ENCODE measurements at regions of chr7 and their contacts with region 1.

Region 1: DNA sequence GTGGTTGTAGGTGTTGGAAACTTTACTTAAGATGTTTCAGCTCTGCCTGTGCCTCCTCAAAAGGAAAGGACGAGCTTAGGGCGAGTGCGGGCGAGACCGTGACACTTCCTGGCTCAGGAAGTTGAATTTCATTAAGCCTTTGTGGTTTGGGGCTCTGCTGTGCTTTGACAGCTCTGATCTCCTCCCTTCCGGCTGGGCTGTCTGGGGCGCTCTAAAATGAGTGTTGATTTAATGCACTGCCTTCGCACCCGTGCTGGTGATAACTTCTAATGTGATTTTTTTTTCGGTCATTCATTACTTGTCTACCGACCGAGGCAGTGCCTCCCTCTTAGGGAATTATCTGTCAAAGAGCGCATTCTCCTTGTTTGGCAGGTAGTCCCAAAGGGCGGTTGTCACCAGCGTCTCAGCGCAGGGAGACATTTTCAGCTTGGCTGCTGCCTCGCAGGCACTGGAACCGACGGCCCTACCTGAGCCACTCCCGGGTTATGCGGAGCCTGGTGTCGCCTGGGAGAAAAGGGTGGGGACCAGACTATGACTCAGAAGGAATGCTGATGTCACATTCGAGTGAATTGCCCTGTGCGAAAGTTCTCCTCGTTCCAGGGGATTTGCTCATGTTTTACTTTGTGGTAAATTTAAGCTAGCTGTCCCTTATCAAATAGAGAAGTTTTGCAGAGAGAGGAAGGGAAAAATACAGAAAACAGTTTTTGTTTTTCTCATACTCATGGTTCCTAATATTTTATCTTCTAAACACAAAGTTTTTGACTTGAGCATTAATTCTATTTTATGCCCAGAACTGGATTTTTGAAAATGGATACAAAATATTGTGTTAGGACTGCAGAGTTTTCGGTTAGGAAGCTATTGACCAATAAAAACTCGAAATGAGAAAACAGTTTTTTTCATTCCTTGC is 920 bp downstream of the TES start:
- DNase-seq: peak; percentile 73
- H3K4me3 Mint-ChIP-seq: peak overlapping the region; percentile 96
- H3K27ac Mint-ChIP-seq: peak overlapping the region; percentile 95
- H3K4me1 Mint-ChIP-seq: peaks cover 50% of the 10 kb centered on the region
- H3K27me3 Mint-ChIP-seq: no peaks in the 10 kb centered on the region

Region 2: GRCh38 chr7:116145245-116145852 is 65.9 kb before region 1 on chr7:
- intact Hi-C with region 1: loop called (anchors 1 kb)
- DNase-seq: peak; percentile 37
- H3K4me3 Mint-ChIP-seq: peak overlapping the region; percentile 41
- H3K27ac Mint-ChIP-seq: peak overlapping the region; percentile 79
- H3K4me1 Mint-ChIP-seq: peaks cover 54% of the 10 kb centered on the region
- H3K27me3 Mint-ChIP-seq: no peaks in the 10 kb centered on the region

Region 3: GRCh38 chr7:116224492-116225098 is 13.3 kb after region 1 on chr7:
- intact Hi-C with region 1: loop called (anchors 1 kb)
- DNase-seq: no peak
- H3K4me3 Mint-ChIP-seq: peak overlapping the region; percentile 47
- H3K27ac Mint-ChIP-seq: peak overlapping the region; percentile 50
- H3K4me1 Mint-ChIP-seq: peaks cover 52% of the 10 kb centered on the region
- H3K27me3 Mint-ChIP-seq: no peaks in the 10 kb centered on the region

Region 4: DNA sequence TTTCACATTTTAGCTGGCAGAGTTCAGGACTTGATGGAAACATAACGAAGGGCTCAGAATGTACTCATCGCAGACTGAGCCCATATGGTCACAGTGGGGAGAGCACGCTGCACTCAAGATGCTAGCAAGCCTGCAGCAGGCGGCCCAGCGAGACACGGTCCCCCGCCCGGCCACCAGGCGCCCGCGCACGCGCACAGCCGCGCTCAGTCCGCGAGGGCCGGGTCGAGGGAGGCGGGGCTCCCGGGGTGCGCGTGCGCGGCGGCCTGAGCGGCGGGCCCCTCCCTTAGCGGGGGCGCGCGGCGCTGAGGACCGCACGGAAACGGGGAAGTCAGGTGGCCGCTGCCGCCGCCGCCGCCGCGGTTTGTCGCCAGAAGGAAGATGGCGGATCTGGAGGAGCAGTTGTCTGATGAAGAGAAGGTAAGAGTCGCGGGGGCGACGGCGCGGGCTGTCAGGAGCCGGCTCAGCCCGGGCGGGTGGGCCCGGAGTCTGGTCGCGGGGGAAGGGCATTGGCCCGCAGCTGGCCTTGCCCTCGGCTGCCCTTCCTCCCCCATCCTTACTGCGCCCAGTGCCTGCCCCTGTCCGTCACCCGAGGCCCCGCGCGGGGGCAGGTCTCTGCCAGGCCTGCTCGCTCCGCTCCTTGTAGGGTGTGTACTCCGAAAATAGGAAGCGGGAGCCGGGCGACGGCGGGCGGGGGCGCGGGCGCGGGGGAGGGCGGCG is 651.1 kb after region 1 on chr7 and contains the start of gene CAPZA2:
- intact Hi-C with region 1: loop called (anchors 5 kb)
- DNase-seq: peak; percentile 92
- H3K4me3 Mint-ChIP-seq: peak within 1 kb of the TSS; percentile 96
- H3K27ac Mint-ChIP-seq: peak within 1 kb of the TSS; percentile 98
- H3K4me1 Mint-ChIP-seq: peaks cover 30% of the 10 kb centered on the region
- H3K27me3 Mint-ChIP-seq: peaks cover 20% of the 10 kb centered on the region
- total RNA-seq, gene CAPZA2: 128 and 147 TPM in 2 replicates

Region 5: GRCh38 chr7:116953727-116954442 is 742.6 kb after region 1 on chr7:
- intact Hi-C with region 1: loop called (anchors 10 kb)
- DNase-seq: no peak
- H3K4me3 Mint-ChIP-seq: peak overlapping the region; percentile 94
- H3K27ac Mint-ChIP-seq: peak overlapping the region; percentile 89
- H3K4me1 Mint-ChIP-seq: peaks cover 31% of the 10 kb centered on the region
- H3K27me3 Mint-ChIP-seq: peaks cover 8% of the 10 kb centered on the region

Region 6: GRCh38 chr7:117014673-117015133 is 803.4 kb after region 1 on chr7:
- intact Hi-C with region 1: loop called (anchors 10 kb)
- DNase-seq: no peak
- H3K4me3 Mint-ChIP-seq: no peak overlapping the region
- H3K27ac Mint-ChIP-seq: no peak overlapping the region
- H3K4me1 Mint-ChIP-seq: peaks cover 53% of the 10 kb centered on the region
- H3K27me3 Mint-ChIP-seq: peaks cover 7% of the 10 kb centered on the region

Measured in activated T-helper 2 cell treated with anti-CD3 and anti-CD28 coated beads, Interferon-gamma antibody, Interleukin-2, Interleukin-4, amounts not matched to agents 10 μg/mL and 5 μg/mL and 100 μg/mL, durations not matched to agents 14 hours and 24 hours and 36 hours (primary cell).